ENCODE measurements at regions of chr17 and their contacts with region 1.

Region 1: DNA sequence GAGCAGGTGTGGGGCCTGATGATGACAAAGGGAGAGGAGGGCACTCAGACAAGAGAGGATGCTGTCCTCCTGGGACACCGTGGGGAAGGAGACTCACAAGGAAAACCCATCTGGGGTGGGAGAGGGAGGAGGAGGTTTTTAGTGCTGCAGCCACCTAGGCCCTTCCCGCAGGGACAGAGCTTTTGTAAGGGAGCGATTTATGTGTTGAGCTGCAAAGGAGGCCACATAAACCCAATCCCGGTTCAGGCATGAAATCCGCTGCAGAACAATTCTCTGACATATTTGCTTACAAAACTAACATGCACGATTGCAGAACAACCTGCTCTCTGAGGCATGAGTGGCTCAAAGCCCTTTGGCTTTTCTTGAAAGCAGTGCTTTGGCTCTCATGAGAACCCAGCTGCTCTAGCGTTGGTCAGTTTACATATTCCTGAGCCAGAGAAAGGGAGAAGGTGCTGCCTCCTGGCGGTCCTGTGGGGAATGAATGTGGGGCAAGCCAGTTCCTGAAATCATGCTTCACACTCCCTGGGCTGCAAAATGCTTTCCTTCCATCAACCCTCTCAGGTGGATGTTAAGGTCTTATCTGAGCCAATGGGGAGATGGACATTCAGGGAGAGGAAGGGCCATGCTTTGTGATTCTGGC is 122.4 kb upstream of the NLRP1 start:
- DNase-seq: peak; percentile 60
- H3K4me3 ChIP-seq: no peak overlapping the region
- H3K27ac ChIP-seq: no peak overlapping the region
- H3K4me1 ChIP-seq: no peaks in the 10 kb centered on the region
- H3K27me3 ChIP-seq: no peaks in the 10 kb centered on the region
- CTCF ChIP-seq: peak; percentile 81

Region 2: GRCh38 chr17:5592382-5592781 is 114.3 kb before region 1 on chr17:
- intact Hi-C with region 1: loop called (anchors 2 kb)
- DNase-seq: no peak
- H3K4me3 ChIP-seq: no peak overlapping the region
- H3K27ac ChIP-seq: no peak overlapping the region
- H3K4me1 ChIP-seq: no peaks in the 10 kb centered on the region
- H3K27me3 ChIP-seq: no peaks in the 10 kb centered on the region
- CTCF ChIP-seq: peak; percentile 50

Region 3: DNA sequence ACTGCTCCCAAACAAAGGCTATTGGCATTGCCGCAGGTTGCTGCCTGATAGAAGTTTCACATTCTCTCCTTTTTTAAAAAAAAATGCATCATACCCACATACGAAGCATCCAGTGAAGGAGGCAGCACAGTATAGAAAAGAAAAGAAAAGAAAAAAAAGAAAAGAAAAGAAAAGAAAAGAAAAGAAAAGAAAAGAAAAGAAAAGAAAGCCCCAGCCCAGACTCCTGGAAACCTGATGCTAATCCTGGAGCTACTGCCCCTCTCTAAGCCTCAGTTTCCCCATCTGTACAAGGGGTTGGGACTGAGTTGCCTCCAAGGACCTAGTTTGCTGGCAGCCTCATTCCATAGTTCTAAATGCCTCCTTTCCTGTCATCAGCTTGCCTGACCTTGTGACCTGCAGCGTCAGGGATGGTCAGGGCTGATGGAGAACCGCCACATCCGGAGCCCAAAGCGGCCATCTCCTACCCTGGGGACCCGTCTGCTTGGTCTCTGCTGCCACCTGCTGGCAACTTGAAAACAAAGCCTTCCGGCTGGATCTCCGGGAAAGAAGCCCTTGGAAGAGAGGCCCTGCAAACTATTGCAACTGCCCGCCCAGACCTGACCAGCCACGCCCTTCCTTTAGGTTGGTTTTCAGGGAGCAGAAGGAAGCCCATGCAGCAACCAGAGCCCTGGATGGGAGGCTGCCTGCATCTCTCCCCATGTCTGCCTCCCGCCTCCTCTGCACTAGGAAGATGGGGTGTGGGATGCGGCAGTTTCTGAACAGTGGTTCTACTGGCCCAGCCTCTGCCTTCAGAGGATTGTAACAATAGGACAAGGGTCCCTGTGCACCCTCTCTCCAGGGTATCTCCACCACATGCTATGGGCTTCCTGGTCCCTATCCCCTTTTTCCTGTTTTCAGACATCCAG is 715.3 kb after region 1 on chr17:
- intact Hi-C with region 1: loop called (anchors 5 kb)
- DNase-seq: peak; percentile 80
- H3K4me3 ChIP-seq: no peak overlapping the region
- H3K27ac ChIP-seq: no peak overlapping the region
- H3K4me1 ChIP-seq: no peaks in the 10 kb centered on the region
- H3K27me3 ChIP-seq: no peaks in the 10 kb centered on the region
- CTCF ChIP-seq: peak; percentile 73

Measured in colonic mucosa (tissue), 4 donors.